GM13977 (cell line): ENCODE measurements at regions of chr5 and their contacts with region 1.

Region 1: GRCh38 chr5:135829681-135830383 is 4.6 kb upstream of the SLC25A48 start:
- DNase-seq: peak; percentile 72
- CTCF ChIP-seq: peak; percentile 68

Region 2: GRCh38 chr5:135376961-135377624 is 452.7 kb before region 1 on chr5:
- in situ Hi-C with region 1: no loop called
- DNase-seq: peak; percentile 50
- CTCF ChIP-seq: no peak

Region 3: DNA sequence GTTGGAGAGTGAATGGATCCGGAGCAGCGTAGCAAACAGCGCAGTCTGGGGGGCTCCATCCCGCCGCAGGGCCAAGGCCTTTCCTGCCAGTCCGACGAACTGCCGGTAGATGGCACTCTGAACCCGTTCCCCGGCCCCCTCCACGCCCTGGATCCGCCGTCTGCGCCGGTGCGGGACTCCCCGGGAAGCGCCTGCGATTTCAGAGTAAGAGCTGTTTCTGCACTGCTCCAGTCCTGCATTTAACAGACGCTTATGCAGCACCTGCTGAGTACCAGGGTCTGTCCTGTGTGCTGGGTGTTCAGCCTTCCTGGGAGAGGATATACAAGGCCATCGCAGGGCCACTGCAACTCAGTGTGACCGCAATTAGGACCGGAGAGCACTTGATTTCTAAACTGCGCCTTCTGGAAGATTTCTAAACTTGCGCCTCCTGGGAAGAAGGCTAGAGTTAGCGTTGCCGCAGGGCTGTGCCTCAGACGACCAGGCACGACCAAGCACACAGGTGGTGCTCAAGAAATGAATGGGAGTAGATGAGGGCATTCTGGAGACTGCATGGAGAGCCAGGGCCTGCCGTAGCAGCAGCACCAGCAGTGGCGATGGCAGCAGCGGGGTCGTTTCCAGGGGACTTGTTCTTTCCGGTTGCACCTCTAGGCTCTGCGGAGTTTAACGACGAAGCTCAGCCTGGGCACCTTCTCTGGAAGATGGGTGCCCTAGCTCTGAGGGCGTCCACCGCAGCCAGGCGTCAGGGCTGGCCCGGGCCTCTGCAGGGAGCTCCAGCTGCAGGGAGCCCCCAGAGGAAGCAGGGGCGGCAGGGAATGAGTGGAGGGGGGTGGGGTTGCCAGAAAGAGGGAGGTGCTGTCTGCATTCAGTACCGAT is 363.4 kb before region 1 on chr5:
- in situ Hi-C with region 1: loop called (anchors 10 kb)
- DNase-seq: peak; percentile 79
- CTCF ChIP-seq: peak; percentile 89

Region 4: DNA sequence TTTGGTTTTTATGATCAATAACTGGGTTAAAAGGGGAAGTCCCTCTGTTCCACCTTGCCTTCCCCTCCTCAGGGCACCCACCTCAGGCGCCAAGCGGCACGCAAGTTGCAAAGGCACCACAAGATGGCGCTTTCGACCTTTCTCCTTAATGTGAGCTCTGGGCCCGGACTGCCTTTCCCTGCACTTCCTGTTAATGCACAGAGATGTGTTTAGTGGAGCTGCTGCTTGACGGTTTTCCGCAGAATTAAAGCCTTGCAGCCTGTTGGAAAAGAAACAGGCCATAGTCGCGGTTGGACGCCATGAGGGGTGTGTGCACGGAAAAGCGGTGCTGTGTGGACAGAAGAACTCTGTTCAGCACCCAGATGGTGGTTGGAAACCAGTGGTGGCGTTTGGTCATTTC is 269.0 kb before region 1 on chr5:
- in situ Hi-C with region 1: loop called (anchors 25 kb)
- DNase-seq: peak; percentile 80
- CTCF ChIP-seq: peak; percentile 83

Region 5: DNA sequence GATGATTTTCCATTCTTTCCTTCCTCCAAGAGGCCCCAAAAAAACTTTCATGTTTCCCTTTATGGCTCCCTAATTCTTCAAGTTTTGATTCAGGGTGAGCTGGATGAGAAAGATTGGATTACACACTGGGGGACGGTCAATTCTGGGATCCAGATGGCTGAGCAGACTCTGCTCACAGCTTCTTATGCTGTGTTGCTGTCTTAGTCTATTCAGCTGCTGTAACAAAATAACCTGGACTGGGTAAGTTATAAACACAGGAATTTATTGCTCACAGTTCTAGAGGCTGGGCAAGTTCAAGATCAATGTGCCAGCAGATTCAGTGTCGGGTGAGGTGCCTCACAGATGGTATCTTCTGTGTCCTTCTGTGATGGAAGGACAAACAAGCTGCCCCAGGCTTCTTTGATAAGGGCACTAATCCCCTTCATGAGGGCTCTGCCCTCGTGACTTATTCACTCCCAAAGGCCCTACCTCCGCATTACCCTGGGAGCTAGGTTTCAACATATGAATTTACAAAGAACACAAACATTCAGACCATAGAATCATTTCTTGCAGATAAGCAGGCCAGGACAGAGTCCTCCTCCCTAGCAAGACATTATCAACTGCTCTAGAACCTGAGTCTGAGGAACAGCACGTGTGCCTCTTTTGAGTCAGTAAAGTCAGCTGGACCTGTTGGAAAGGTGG is 279.8 kb after region 1 on chr5:
- in situ Hi-C with region 1: no loop called
- DNase-seq: no peak
- CTCF ChIP-seq: no peak

Region 6: GRCh38 chr5:136511046-136511445 is 681.2 kb after region 1 on chr5:
- in situ Hi-C with region 1: no loop called
- DNase-seq: no peak
- CTCF ChIP-seq: no peak